ENCODE measurements at regions of chr7 and their contacts with region 1.

Region 1: GRCh38 chr7:43729214-43729923 is at the start of gene COA1:
- DNase-seq: peak; percentile 88 to 95 (median 94)
- ATAC-seq: peak; percentile 99
- H3K4me3 ChIP-seq: peak within 1 kb of the TSS; percentile 81
- H3K27ac ChIP-seq: peak within 1 kb of the TSS; percentile 55
- H3K4me1 ChIP-seq: peaks cover 3% of the 10 kb centered on the region
- H3K27me3 ChIP-seq: no peaks in the 10 kb centered on the region
- total RNA-seq, gene COA1: 53.3 to 66.3 (median 60.6) TPM

Region 2: GRCh38 chr7:43701929-43702328 is 27.4 kb before region 1 on chr7:
- intact Hi-C with region 1: no loop called
- DNase-seq: no peak
- ATAC-seq: no peak
- H3K4me3 ChIP-seq: no peak overlapping the region
- H3K27ac ChIP-seq: no peak overlapping the region
- H3K4me1 ChIP-seq: no peaks in the 10 kb centered on the region
- H3K27me3 ChIP-seq: no peaks in the 10 kb centered on the region

Region 3: DNA sequence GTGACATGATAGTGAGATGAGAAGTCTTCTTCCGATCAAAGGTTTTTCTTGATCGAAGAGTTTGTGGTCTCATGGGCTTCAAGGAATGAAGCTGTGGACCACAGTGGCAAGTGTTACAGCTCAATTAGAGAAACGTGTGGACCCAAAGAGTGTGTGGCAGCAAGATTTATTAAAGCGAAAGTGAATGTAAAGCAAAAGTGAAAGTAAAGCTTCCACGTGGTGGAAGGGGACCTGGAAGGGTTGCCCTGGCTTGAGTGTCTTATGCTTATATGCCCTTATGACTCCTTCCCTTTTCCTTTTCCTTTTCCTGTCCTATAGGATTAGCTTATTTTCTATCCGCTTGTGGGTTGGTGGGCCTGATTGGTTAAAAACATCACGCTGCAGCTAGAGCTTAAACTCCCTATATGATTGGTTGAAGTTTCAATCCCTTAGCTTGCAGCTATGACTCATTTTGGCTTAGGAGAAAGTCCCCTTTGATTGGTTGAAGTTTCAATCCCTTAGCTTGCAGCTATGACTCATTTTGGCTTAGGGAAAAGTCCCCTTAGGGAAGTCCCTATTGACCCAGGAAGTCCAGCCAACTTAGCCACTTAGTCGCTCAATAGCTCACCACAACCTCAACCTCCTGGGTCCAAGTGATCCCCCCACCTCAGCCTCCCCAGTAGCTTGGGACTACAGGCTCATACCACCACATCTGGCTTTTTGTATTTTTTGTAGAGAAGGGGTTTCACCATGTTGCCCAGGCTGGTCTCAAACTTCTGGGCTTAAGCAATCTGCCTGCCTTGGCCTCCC is 105.3 kb after region 1 on chr7:
- intact Hi-C with region 1: loop called in 1 of 4 experiments (anchors 10 kb)
- DNase-seq: no peak
- ATAC-seq: peak in 1 of 2 donors; percentile 15
- H3K4me3 ChIP-seq: no peak overlapping the region
- H3K27ac ChIP-seq: no peak overlapping the region
- H3K4me1 ChIP-seq: no peaks in the 10 kb centered on the region
- H3K27me3 ChIP-seq: no peaks in the 10 kb centered on the region

Measured in right cardiac atrium (tissue), 5 donors.